ENCODE measurements at regions of chr19 and their contacts with region 1.

Region 1: GRCh38 chr19:2983351-2984195 is 6.2 kb downstream of the TLE6 start:
- DNase-seq: peak; percentile 53 to 70
- H3K4me3 ChIP-seq: peak overlapping the region; percentile 46 to 61
- H3K27ac ChIP-seq: peak overlapping the region; percentile 88 to 96
- H3K4me1 ChIP-seq: peaks cover 15 to 23% of the 10 kb centered on the region in 2 donors
- H3K27me3 ChIP-seq: no peaks in the 10 kb centered on the region
- CTCF ChIP-seq: no peak

Region 2: DNA sequence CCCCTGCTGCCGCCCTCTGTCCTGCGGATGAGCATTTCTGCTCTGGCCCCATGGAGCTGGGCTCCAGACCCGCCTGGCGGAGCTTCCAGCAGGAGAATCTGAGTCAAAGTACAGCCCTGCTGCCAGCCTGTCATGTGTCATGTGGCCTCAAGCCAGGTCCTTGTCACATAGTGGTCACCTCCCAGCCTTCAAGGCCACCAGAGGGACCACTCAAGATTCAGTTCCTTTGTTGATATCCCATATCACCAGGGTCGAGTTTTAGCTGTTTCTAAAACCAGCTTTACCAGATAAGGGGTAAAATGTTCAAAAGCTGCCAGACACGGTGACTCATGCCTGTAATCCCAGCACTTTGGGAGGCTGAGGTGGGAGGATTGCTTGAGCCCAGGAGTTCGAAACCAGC is 184.8 kb before region 1 on chr19:
- intact Hi-C with region 1: no loop called
- DNase-seq: no peak
- H3K4me3 ChIP-seq: no peak overlapping the region
- H3K27ac ChIP-seq: no peak overlapping the region
- H3K4me1 ChIP-seq: no peaks in the 10 kb centered on the region
- H3K27me3 ChIP-seq: no peaks in the 10 kb centered on the region
- CTCF ChIP-seq: no peak

Region 3: DNA sequence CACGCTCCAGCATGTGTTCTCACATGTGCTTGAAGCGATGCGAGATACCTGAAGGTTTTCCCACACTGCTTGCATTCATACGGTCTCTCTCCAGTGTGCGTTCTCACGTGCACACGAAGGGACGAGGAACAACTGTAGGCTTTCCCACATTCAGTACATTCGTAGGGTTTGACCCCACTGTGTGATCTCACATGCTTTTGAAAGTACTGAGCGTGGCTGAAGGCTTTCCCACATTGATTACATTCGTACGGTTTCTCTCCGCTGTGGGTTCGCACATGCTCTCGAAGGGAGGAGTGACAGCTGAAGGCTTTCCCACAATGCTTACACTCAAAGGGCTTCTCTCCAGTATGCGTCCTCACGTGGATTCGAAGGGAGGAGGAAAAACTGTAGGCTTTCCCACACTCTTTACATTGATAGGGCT is 50.1 kb before region 1 on chr19:
- intact Hi-C with region 1: no loop called
- DNase-seq: peak in 1 of 2 donors; percentile 34
- H3K4me3 ChIP-seq: no peak overlapping the region
- H3K27ac ChIP-seq: no peak overlapping the region
- H3K4me1 ChIP-seq: no peaks in the 10 kb centered on the region
- H3K27me3 ChIP-seq: no peaks in the 10 kb centered on the region
- CTCF ChIP-seq: no peak

Region 4: DNA sequence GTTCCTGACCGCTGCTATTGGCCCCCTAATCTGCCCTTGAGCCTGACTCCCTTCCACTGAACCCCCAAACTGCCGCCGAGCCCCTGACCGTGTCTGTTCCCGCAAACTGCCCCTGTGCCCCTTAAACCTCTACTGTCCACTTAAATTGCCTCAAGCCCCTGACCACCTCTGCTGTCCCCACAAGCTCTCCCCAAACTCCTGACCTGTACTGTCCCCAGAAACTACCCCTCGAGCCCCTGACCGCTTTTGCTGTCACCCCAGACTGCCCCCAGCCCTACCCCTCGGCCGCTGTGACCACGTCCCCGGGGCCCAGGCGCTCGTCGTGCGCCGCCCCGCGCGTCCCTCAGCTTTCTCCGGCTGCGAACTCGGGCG is 39.2 kb before region 1 on chr19:
- intact Hi-C with region 1: no loop called
- DNase-seq: no peak
- H3K4me3 ChIP-seq: peak overlapping the region; percentile 97
- H3K27ac ChIP-seq: peak overlapping the region; percentile 80 to 91
- H3K4me1 ChIP-seq: peaks cover 1 to 14% of the 10 kb centered on the region in 2 donors
- H3K27me3 ChIP-seq: no peaks in the 10 kb centered on the region
- CTCF ChIP-seq: no peak

Region 5: GRCh38 chr19:3062168-3063102 is 78.9 kb after region 1 on chr19 and contains the start of gene TLE5:
- intact Hi-C with region 1: loop called (anchors 1 kb)
- DNase-seq: peak in 1 of 2 donors; percentile 77
- H3K4me3 ChIP-seq: peak within 1 kb of the TSS; percentile 75 to 86
- H3K27ac ChIP-seq: peak within 1 kb of the TSS; percentile 87
- H3K4me1 ChIP-seq: peaks cover 13 to 14% of the 10 kb centered on the region in 2 donors
- H3K27me3 ChIP-seq: no peaks in the 10 kb centered on the region
- CTCF ChIP-seq: no peak
- total RNA-seq, gene TLE5: 559 TPM

Region 6: DNA sequence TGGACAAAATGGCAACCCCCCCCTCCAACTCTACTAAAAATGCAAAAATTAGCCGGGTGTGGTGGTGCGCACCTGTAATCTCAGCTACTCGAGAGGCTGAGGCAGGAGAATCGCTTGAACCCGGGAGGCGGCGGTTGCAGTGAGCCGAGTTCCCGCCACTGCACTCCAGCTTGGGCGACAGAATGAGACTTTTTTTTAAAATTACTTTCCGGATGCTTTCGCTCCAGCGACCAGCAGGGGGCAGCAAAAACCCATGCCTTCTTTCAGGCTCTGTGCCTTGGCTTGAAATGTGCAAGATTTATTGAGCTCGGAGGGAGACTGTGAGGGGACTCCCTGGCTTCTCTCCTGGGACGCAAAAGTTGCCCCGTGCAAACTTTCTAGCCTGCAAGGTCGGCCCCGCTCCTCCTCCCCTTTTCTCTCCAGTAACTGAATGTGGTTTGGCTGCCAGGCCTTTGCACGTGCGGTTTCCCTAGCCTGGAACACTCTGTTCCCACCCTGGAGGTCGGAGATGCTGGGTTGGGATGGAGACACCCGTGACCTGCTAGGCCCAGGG is 321.4 kb after region 1 on chr19:
- intact Hi-C with region 1: no loop called
- DNase-seq: peak in 1 of 2 donors; percentile 81
- H3K4me3 ChIP-seq: no peak overlapping the region
- H3K27ac ChIP-seq: no peak overlapping the region
- H3K4me1 ChIP-seq: peaks cover 0 to 3% of the 10 kb centered on the region in 2 donors
- H3K27me3 ChIP-seq: peaks cover 4% of the 10 kb centered on the region
- CTCF ChIP-seq: peak; percentile 81 to 94 (median 84)

Measured in ascending aorta (tissue), 2 donors.